Heart left ventricle (tissue), 16 donors: ENCODE measurements at regions of chr3 and their contacts with region 1.

Region 1: DNA sequence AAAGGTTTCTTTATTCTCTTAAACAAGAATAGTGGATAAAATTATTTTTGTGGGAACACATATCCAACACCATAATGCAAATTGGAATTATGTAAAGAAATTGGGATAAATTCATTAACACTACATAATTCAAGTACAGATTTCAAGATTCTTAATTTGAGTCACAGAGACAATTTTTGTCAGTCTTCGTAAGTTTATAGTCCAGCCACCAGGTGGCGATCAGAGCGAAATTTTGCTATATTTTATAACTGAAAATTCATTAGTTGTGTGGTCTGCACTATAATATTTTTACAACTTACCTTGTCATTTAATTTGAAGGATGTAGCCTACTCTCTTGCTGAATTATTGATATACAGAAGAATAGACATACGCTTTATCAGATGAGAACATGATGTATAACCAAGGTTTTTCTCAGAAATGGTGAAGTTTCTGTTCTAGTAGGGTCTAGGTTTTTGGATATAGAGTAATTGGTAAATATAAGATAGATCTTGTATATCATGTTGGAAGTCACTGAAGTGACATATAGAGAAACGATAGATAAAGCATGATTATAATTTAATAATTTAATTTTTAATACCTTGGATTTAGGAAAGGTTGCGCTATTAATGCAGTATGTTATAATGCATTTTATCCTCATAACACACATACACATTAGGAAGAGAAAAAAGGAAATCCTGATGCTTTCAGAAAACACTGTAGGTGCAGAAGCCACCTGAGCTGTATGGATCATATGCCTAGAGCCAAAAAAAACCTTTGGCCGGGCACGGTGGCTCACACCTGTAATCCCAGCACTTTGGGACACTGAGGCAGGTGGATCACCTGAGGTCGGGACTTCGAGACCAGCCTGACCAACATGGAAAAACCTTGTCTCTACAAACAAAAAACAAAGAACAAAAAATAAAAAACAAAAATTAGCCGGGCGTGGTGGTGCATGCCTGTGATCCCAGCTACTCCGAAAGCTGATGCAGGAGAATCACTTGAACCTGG is 31.7 kb downstream of the PLSCR4 start:
- DNase-seq: peak in 3 of 5 donors; percentile 27 to 33 (median 31)
- ATAC-seq: no peak
- H3K4me3 ChIP-seq: no peak overlapping the region
- H3K27ac ChIP-seq: no peak overlapping the region
- H3K4me1 ChIP-seq: peaks cover 0 to 42% (median 9%) of the 10 kb centered on the region in 12 donors
- H3K27me3 ChIP-seq: no peaks in the 10 kb centered on the region
- CTCF ChIP-seq: peak; percentile 63 to 86 (median 76)
- POLR2A ChIP-seq: no peak

Region 2: GRCh38 chr3:146160321-146160963 is 58.7 kb before region 1 on chr3:
- intact Hi-C with region 1: no loop called
- DNase-seq: peak in 4 of 5 donors; percentile 66 to 80 (median 70)
- ATAC-seq: peak; percentile 56 to 72 (median 62)
- H3K4me3 ChIP-seq: peak overlapping the region; percentile 72 to 94 (median 79)
- H3K27ac ChIP-seq: peak overlapping the region; percentile 75 to 97 (median 92)
- H3K4me1 ChIP-seq: peaks cover 6 to 64% (median 46%) of the 10 kb centered on the region in 12 donors
- H3K27me3 ChIP-seq: peaks cover 0 to 12% (median 0%) of the 10 kb centered on the region in 9 donors
- CTCF ChIP-seq: peak in 10 of 12 donors; percentile 23 to 67 (median 49)
- POLR2A ChIP-seq: peak in 1 of 2 donors; percentile 19

Region 3: GRCh38 chr3:146250449-146251382 is 31.5 kb after region 1 on chr3 and contains the start of gene PLSCR4:
- intact Hi-C with region 1: loop called in 1 of 10 experiments (anchors 2 kb)
- DNase-seq: peak; percentile 82 to 91 (median 87)
- ATAC-seq: peak; percentile 87 to 97 (median 96)
- H3K4me3 ChIP-seq: peak within 1 kb of the TSS; percentile 62 to 87 (median 78)
- H3K27ac ChIP-seq: peak within 1 kb of the TSS; percentile 77 to 96 (median 88)
- H3K4me1 ChIP-seq: peaks cover 0 to 21% (median 11%) of the 10 kb centered on the region in 12 donors
- H3K27me3 ChIP-seq: peaks cover 0 to 7% (median 0%) of the 10 kb centered on the region in 9 donors
- CTCF ChIP-seq: no peak
- POLR2A ChIP-seq: peak in 1 of 2 donors; percentile 51
- total RNA-seq, gene PLSCR4: 6.2 to 36.3 (median 13.8) TPM

Region 4: GRCh38 chr3:146326670-146327543 is 107.7 kb after region 1 on chr3:
- intact Hi-C with region 1: loop called (anchors 1 to 5 kb)
- DNase-seq: peak in 3 of 5 donors; percentile 24 to 34 (median 31)
- ATAC-seq: peak; percentile 26 to 85 (median 80)
- H3K4me3 ChIP-seq: no peak overlapping the region
- H3K27ac ChIP-seq: no peak overlapping the region
- H3K4me1 ChIP-seq: peaks cover 0 to 5% (median 0%) of the 10 kb centered on the region in 12 donors
- H3K27me3 ChIP-seq: no peaks in the 10 kb centered on the region
- CTCF ChIP-seq: peak; percentile 25 to 75 (median 61)
- POLR2A ChIP-seq: no peak

Region 5: DNA sequence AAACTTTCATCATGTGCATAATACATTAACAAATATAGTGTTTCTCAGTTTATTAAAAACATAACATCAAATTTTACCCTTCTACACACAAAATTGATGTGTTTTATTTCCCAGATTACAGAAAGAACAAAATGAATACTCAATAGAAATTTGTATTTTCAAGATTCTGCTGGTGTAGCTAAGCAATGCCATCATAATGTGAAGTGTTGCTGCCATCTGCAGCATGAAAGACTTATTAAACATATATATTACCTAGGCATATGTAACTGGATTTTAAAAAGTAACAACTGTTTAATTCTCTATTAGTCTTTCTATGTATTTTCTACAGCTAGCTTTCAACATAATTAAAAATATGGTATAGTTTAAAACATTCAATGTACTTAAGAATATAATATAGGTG is 358.5 kb after region 1 on chr3:
- intact Hi-C with region 1: loop called (anchors 2 to 10 kb)
- DNase-seq: no peak
- ATAC-seq: peak in 1 of 4 donors; percentile 55
- H3K4me3 ChIP-seq: no peak overlapping the region
- H3K27ac ChIP-seq: no peak overlapping the region
- H3K4me1 ChIP-seq: no peaks in the 10 kb centered on the region
- H3K27me3 ChIP-seq: no peaks in the 10 kb centered on the region
- CTCF ChIP-seq: peak in 11 of 12 donors; percentile 23 to 61 (median 56)
- POLR2A ChIP-seq: no peak